GM10248 (cell line): ENCODE measurements at regions of chrX and their contacts with region 1.

Region 1: GRCh38 chrX:71532753-71533425 is at the start of gene OGT:
- DNase-seq: peak; percentile 69
- CTCF ChIP-seq: no peak

Region 2: GRCh38 chrX:70301716-70302115 is 1231.2 kb before region 1 on chrX:
- CTCF ChIA-PET with region 1: no interaction called
- POLR2A ChIA-PET with region 1: no interaction called
- DNase-seq: no peak
- CTCF ChIP-seq: no peak

Region 3: GRCh38 chrX:71393919-71394318 is 139.0 kb before region 1 on chrX:
- CTCF ChIA-PET with region 1: no interaction called
- POLR2A ChIA-PET with region 1: interaction called, 13 read pairs
- DNase-seq: no peak
- CTCF ChIP-seq: no peak

Region 4: DNA sequence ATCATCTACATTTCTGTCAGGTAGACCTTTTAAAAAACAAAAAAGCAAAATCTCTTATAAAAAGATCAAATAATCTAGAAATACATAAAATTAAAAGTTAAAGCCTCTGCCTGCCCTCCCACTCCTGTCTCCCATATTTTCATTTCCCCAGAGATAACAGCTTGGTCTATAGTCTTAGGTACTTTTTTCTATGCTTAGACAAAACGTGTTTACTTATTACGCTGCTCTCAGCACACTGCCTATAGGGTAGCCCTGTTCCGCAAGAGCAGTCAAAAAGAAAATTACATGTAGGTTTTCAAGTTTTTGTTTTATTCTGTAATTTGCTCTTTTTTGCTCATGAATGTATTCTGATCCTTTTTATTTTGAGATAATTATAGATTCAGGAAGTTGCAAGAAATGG is 93.5 kb before region 1 on chrX:
- CTCF ChIA-PET with region 1: no interaction called
- POLR2A ChIA-PET with region 1: no interaction called
- DNase-seq: no peak
- CTCF ChIP-seq: no peak

Region 5: GRCh38 chrX:71493111-71493613 is 39.7 kb before region 1 on chrX:
- CTCF ChIA-PET with region 1: no interaction called
- POLR2A ChIA-PET with region 1: interaction called, 10 read pairs
- DNase-seq: no peak
- CTCF ChIP-seq: no peak

Region 6: DNA sequence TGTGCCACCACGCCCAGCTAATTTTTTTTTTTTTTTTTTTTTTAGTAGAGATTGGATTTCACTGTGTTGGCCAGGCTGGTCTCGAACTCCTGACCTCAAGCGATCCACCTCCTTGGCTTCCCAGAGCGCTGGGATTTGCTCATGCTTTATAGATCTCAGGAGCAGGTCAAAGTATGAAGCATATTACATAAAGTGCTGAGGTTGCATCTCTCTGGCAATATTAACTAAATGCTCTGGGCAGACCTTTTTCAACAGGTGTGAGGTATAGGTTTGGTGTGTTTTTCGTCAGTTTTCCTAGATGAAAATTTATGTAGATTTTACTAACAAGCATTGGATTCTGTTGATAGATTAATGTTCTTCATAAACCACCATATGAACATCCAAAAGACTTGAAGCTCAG is 26.0 kb after region 1 on chrX:
- CTCF ChIA-PET with region 1: no interaction called
- POLR2A ChIA-PET with region 1: no interaction called
- DNase-seq: no peak
- CTCF ChIP-seq: no peak

Region 7: GRCh38 chrX:71652405-71652804 is 119.5 kb after region 1 on chrX:
- CTCF ChIA-PET with region 1: interaction called, 10 read pairs
- POLR2A ChIA-PET with region 1: no interaction called
- DNase-seq: no peak
- CTCF ChIP-seq: peak; percentile 40

Region 8: GRCh38 chrX:72203421-72203820 is 670.5 kb after region 1 on chrX:
- CTCF ChIA-PET with region 1: no interaction called
- POLR2A ChIA-PET with region 1: interaction called, 12 read pairs
- DNase-seq: no peak
- CTCF ChIP-seq: no peak